Activated CD4-positive, alpha-beta T cell treated with anti-CD3 and anti-CD28 coated beads for 36 hours (primary cell): ENCODE measurements at regions of chr6 and their contacts with region 1.

Region 1: GRCh38 chr6:16712931-16713484 is 48.3 kb downstream of the ATXN1 start:
- DNase-seq: peak; percentile 57
- ATAC-seq: peak; percentile 63
- H3K4me3 Mint-ChIP-seq: peak overlapping the region; percentile 45
- H3K27ac Mint-ChIP-seq: peak overlapping the region; percentile 91
- H3K4me1 Mint-ChIP-seq: peaks cover 52% of the 10 kb centered on the region
- H3K27me3 Mint-ChIP-seq: no peaks in the 10 kb centered on the region

Region 2: DNA sequence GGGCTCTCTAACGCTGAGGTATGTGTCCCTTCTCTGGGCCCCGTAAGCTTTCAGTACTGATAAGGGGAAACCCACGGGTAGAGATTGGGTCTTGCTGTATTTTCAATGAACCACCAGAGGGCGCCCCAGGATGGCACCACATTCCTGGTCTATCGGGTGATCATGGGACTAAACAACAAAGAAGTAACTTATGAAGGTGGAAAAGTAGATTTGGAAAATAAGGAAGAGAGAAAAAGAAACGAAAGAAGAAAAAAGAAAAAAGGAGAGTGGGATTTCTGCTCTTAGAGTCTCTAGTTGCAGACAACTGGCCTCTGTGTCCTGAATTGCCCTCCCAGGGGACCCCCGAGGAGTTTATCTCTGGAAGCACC is 380.8 kb before region 1 on chr6:
- CTCF ChIA-PET with region 1: interaction called, 3 read pairs
- POLR2A ChIA-PET with region 1: no interaction called
- intact Hi-C with region 1: loop called in 1 of 2 experiments (anchors 5 kb)
- DNase-seq: peak; percentile 91
- ATAC-seq: peak; percentile 98
- H3K4me3 Mint-ChIP-seq: no peak overlapping the region
- H3K27ac Mint-ChIP-seq: no peak overlapping the region
- H3K4me1 Mint-ChIP-seq: no peaks in the 10 kb centered on the region
- H3K27me3 Mint-ChIP-seq: no peaks in the 10 kb centered on the region

Region 3: GRCh38 chr6:16533721-16534136 is 179.3 kb before region 1 on chr6:
- CTCF ChIA-PET with region 1: no interaction called
- POLR2A ChIA-PET with region 1: no interaction called
- intact Hi-C with region 1: loop called in 1 of 2 experiments (anchors 1 kb)
- DNase-seq: no peak
- ATAC-seq: peak; percentile 89
- H3K4me3 Mint-ChIP-seq: no peak overlapping the region
- H3K27ac Mint-ChIP-seq: peak overlapping the region; percentile 75
- H3K4me1 Mint-ChIP-seq: peaks cover 29% of the 10 kb centered on the region
- H3K27me3 Mint-ChIP-seq: no peaks in the 10 kb centered on the region

Region 4: GRCh38 chr6:16602035-16602434 is 111.0 kb before region 1 on chr6:
- CTCF ChIA-PET with region 1: no interaction called
- POLR2A ChIA-PET with region 1: no interaction called
- intact Hi-C with region 1: loop called in 1 of 2 experiments (anchors 5 kb)
- DNase-seq: peak; percentile 78
- ATAC-seq: peak; percentile 99
- H3K4me3 Mint-ChIP-seq: no peak overlapping the region
- H3K27ac Mint-ChIP-seq: peak overlapping the region; percentile 55
- H3K4me1 Mint-ChIP-seq: peaks cover 42% of the 10 kb centered on the region
- H3K27me3 Mint-ChIP-seq: peaks cover 3% of the 10 kb centered on the region

Region 5: GRCh38 chr6:16684896-16685554 is 28.0 kb before region 1 on chr6:
- CTCF ChIA-PET with region 1: no interaction called
- POLR2A ChIA-PET with region 1: no interaction called
- intact Hi-C with region 1: loop called (anchors 1 to 2 kb)
- DNase-seq: peak; percentile 95
- ATAC-seq: peak; percentile 76
- H3K4me3 Mint-ChIP-seq: peak overlapping the region; percentile 43
- H3K27ac Mint-ChIP-seq: peak overlapping the region; percentile 78
- H3K4me1 Mint-ChIP-seq: peaks cover 86% of the 10 kb centered on the region
- H3K27me3 Mint-ChIP-seq: no peaks in the 10 kb centered on the region

Region 6: GRCh38 chr6:16698997-16699868 is 13.8 kb before region 1 on chr6:
- CTCF ChIA-PET with region 1: interaction called, 24 read pairs
- POLR2A ChIA-PET with region 1: interaction called, 11 read pairs
- intact Hi-C with region 1: loop called (anchors 1 kb)
- DNase-seq: peak; percentile 45
- ATAC-seq: peak; percentile 63
- H3K4me3 Mint-ChIP-seq: peak overlapping the region; percentile 69
- H3K27ac Mint-ChIP-seq: peak overlapping the region; percentile 95
- H3K4me1 Mint-ChIP-seq: peaks cover 75% of the 10 kb centered on the region
- H3K27me3 Mint-ChIP-seq: no peaks in the 10 kb centered on the region

Region 7: GRCh38 chr6:16731478-16732051 is 18.6 kb after region 1 on chr6:
- CTCF ChIA-PET with region 1: interaction called, 4 read pairs
- POLR2A ChIA-PET with region 1: interaction called, 3 read pairs
- intact Hi-C with region 1: loop called in 1 of 2 experiments (anchors 2 kb)
- DNase-seq: peak; percentile 57
- ATAC-seq: peak; percentile 67
- H3K4me3 Mint-ChIP-seq: peak overlapping the region; percentile 26
- H3K27ac Mint-ChIP-seq: peak overlapping the region; percentile 65
- H3K4me1 Mint-ChIP-seq: peaks cover 57% of the 10 kb centered on the region
- H3K27me3 Mint-ChIP-seq: no peaks in the 10 kb centered on the region

Region 8: DNA sequence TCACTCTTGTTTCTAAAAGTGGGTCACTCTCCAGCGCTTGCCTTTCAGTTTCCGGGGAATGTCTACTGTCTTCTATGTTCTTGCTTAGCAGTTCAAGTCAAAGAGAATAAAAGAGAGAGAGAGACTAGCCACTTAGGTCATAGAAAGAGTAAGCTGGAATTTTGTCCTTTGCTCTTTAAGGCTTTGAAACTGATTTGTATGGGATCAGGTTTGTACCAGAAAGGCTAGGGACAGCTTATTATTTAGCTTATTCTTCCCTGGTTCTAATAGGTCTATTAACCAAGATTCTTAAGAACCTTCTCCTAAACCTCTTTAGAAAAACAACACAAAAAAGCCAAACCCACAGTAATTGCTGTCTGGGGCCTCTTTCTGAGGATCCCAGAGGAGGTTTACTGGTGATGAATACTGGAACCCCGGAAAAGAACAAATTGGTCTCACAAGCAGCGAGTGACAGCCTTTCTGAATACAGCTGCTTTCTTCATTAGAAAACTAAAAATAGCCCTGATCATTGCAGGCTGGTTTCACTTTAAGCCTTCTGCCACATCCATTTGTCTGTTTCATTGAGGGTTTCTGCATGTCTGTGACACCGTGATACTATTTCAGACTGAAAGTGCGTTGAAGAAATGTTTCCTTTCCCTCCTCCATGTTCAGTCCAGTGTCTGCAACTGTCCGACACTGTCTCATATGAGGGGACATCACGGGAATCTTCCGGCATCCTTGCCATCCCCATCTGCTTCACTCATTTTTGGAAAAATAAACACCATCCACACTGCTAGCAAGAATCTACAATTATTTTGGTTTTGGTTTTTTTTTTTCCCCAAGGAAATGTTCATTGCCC is 123.4 kb after region 1 on chr6:
- CTCF ChIA-PET with region 1: no interaction called
- POLR2A ChIA-PET with region 1: no interaction called
- intact Hi-C with region 1: no loop called
- DNase-seq: no peak
- ATAC-seq: peak; percentile 64
- H3K4me3 Mint-ChIP-seq: peak overlapping the region; percentile 5
- H3K27ac Mint-ChIP-seq: peak overlapping the region; percentile 63
- H3K4me1 Mint-ChIP-seq: peaks cover 36% of the 10 kb centered on the region
- H3K27me3 Mint-ChIP-seq: peaks cover 4% of the 10 kb centered on the region